Calu3 (cell line): ENCODE measurements at regions of chr4 and their contacts with region 1.

Region 1: DNA sequence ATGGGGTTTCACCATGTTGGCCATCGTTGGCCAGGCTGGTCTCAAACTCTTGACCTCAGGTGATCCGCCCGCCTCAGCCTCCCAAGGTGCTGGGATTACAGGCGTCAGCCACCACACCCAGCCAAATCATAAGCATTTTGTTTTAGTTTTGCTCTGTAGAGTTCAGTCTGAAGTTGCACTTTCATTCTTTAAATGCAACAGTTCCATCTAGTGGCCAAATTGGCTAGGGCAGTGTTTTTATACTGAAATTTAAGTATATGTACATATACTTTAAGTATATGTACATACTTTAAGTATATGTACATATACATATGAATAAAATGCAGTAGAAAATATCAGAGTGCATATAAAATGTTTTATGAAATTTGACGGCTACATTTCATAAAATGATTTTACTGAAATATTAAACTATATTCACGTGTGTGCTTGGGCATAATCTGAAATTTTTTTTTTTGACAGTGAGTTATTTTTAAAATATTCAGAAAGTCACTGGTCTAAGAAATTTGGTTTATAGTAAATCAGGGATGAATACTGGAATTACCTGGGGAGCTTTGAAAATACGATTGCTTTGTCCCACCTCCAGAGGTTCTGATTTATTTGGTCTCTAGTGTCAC is 145.5 kb downstream of the NWD2 start:
- DNase-seq: peak; percentile 38
- H3K4me3 Mint-ChIP-seq: no peak overlapping the region
- H3K27ac Mint-ChIP-seq: no peak overlapping the region
- H3K4me1 Mint-ChIP-seq: peaks cover 9% of the 10 kb centered on the region
- H3K27me3 Mint-ChIP-seq: no peaks in the 10 kb centered on the region
- CTCF ChIP-seq: peak; percentile 32

Region 2: GRCh38 chr4:36414248-36414647 is 975.8 kb before region 1 on chr4:
- CTCF ChIA-PET with region 1: no interaction called
- intact Hi-C with region 1: loop called (anchors 5 kb)
- DNase-seq: no peak
- H3K4me3 Mint-ChIP-seq: no peak overlapping the region
- H3K27ac Mint-ChIP-seq: no peak overlapping the region
- H3K4me1 Mint-ChIP-seq: no peaks in the 10 kb centered on the region
- H3K27me3 Mint-ChIP-seq: peaks cover 41% of the 10 kb centered on the region
- CTCF ChIP-seq: peak; percentile 14

Region 3: DNA sequence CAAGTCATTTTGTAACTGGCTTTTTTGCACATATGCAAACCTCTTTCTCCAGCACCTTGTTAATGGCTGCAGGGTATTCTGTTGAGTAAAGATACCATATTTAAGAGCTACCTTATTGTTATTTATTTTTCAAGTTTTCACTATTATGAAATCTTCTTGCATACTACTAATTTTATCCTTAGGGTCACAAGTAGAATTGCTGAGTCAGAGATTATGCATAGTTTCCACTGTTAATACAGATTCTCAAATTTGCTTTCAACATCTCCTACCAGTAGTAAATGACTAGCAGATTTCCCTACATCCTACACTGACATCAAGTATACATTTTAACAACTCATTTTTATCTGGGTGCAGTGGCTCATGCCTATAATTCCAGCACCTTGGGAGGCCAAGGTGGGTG is 183.5 kb after region 1 on chr4:
- CTCF ChIA-PET with region 1: no interaction called
- intact Hi-C with region 1: no loop called
- DNase-seq: no peak
- H3K4me3 Mint-ChIP-seq: no peak overlapping the region
- H3K27ac Mint-ChIP-seq: no peak overlapping the region
- H3K4me1 Mint-ChIP-seq: peaks cover 2% of the 10 kb centered on the region
- H3K27me3 Mint-ChIP-seq: no peaks in the 10 kb centered on the region
- CTCF ChIP-seq: no peak